AG04450 (cell line): ENCODE measurements at regions of chr7 and their contacts with region 1.

Region 1: GRCh38 chr7:38215735-38216670 is 38.0 kb downstream of the STARD3NL start:
- DNase-seq: peak; percentile 88
- H3K4me3 ChIP-seq: no peak overlapping the region
- H3K27ac ChIP-seq: no peak overlapping the region
- H3K27me3 ChIP-seq: no peaks in the 10 kb centered on the region
- CTCF ChIP-seq: peak; percentile 99

Region 2: DNA sequence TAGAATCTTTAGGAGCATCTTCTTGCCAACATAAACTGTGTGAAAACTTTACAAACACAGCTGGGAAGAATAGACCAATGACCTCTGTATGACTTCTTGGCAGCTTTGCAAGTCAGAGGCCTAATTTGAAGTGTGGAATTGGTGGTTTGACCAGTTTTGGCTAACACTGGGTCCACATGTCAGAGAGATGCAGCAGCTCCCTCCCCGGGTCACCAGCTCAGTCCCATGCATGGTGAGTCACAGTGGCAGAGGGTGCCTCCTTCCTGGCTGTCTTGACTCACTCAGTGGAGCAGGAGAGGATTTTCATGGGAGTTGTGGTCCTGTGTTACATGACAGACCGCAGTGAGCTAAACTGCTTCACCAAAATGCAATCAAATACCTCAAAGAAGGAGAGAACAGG is 46.2 kb before region 1 on chr7:
- CTCF ChIA-PET with region 1: interaction called, 19 read pairs
- POLR2A ChIA-PET with region 1: no interaction called
- DNase-seq: no peak
- H3K4me3 ChIP-seq: no peak overlapping the region
- H3K27ac ChIP-seq: peak overlapping the region; percentile 4
- H3K27me3 ChIP-seq: peaks cover 3% of the 10 kb centered on the region
- CTCF ChIP-seq: no peak

Region 3: DNA sequence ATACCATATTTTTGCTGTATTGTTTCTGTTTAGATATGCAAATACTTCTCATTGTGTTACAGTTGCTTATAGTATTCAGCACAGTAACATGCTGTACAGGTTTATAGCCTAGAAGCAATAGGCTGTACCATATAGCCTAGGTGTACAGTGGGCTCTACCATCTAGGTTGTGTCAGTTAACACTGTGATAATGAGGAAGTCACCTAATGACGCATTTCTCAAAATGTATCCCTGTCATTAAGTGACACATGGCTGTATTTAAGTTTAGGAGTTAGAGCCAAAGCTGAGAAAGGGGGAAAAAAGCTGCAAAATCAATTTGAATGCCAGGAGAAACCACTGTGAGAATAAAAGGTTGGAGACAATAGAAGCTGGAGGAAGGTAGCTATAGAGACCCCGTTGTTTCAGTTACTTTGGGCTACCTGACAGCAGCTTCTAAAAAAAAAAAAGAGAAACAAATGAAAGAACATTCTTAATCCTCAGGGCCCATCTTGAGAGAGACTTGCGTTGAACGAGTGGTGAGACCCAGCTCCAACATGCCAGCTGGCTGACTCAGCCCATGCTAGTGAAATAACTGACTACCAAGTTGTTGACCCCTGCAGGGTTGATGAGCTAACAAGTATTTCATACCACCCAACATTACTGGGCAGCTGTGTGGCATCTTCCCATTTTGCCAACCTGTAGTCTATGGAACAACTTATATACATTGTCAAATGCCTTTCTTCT is 29.2 kb before region 1 on chr7:
- CTCF ChIA-PET with region 1: interaction called, 66 read pairs
- POLR2A ChIA-PET with region 1: no interaction called
- DNase-seq: no peak
- H3K4me3 ChIP-seq: no peak overlapping the region
- H3K27ac ChIP-seq: no peak overlapping the region
- H3K27me3 ChIP-seq: no peaks in the 10 kb centered on the region
- CTCF ChIP-seq: no peak

Region 4: GRCh38 chr7:38232502-38233366 is 16.7 kb after region 1 on chr7:
- CTCF ChIA-PET with region 1: interaction called, 71 read pairs
- POLR2A ChIA-PET with region 1: no interaction called
- DNase-seq: no peak
- H3K4me3 ChIP-seq: no peak overlapping the region
- H3K27ac ChIP-seq: no peak overlapping the region
- H3K27me3 ChIP-seq: peaks cover 4% of the 10 kb centered on the region
- CTCF ChIP-seq: no peak

Region 5: DNA sequence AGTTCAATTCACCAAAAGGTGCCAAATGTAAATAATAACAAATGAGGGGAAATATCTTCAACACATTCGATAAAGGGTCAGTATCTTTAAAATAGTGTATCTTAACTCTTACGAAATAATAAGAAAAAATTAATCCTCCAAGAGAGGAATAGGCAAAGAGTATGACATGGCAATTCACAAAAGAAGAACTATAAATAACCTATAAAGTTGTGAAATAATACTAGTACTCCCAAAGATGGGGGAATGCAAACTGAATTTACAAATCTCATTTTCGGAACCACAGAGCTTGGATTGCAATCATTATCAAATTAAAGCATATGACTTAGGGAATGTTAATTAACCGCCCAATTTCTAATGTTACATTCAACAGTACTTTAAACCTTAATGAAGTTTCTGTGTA is 135.6 kb after region 1 on chr7:
- CTCF ChIA-PET with region 1: interaction called, 13 read pairs
- POLR2A ChIA-PET with region 1: no interaction called
- DNase-seq: no peak
- H3K4me3 ChIP-seq: no peak overlapping the region
- H3K27ac ChIP-seq: no peak overlapping the region
- H3K27me3 ChIP-seq: no peaks in the 10 kb centered on the region
- CTCF ChIP-seq: no peak

Region 6: DNA sequence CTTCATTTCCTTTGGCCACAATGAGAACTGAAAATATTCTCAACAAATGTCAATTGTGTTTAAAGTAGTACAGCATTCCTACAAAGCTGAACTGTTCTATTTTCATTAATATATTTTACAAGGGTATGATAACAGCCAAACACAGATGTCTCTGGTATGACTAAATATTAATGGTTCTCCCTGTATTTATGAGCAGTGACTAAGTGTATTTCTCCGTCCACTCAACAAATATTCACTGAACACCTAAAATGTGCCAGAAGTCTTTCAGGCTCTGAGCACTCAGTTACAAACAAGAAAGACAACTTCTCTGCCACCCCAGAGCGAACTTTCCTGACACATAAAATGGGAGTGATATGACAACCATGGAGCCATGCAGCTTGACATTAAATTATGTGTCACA is 557.4 kb after region 1 on chr7:
- CTCF ChIA-PET with region 1: no interaction called
- POLR2A ChIA-PET with region 1: no interaction called
- DNase-seq: no peak
- H3K4me3 ChIP-seq: no peak overlapping the region
- H3K27ac ChIP-seq: no peak overlapping the region
- H3K27me3 ChIP-seq: no peaks in the 10 kb centered on the region
- CTCF ChIP-seq: no peak